ENCODE measurements at regions of chr7 and their contacts with region 1.

Region 1: GRCh38 chr7:19026888-19027287 is 90.5 kb downstream of the TWIST1 start:
- DNase-seq: no peak
- H3K4me3 ChIP-seq: no peak overlapping the region
- H3K27ac ChIP-seq: no peak overlapping the region
- H3K4me1 ChIP-seq: no peaks in the 10 kb centered on the region
- H3K27me3 ChIP-seq: no peaks in the 10 kb centered on the region
- CTCF ChIP-seq: no peak
- POLR2A ChIP-seq: no peak

Region 2: GRCh38 chr7:17802056-17802455 is 1224.8 kb before region 1 on chr7:
- intact Hi-C with region 1: no loop called
- DNase-seq: no peak
- H3K4me3 ChIP-seq: no peak overlapping the region
- H3K27ac ChIP-seq: no peak overlapping the region
- H3K4me1 ChIP-seq: no peaks in the 10 kb centered on the region
- H3K27me3 ChIP-seq: no peaks in the 10 kb centered on the region
- CTCF ChIP-seq: no peak
- POLR2A ChIP-seq: no peak

Region 3: DNA sequence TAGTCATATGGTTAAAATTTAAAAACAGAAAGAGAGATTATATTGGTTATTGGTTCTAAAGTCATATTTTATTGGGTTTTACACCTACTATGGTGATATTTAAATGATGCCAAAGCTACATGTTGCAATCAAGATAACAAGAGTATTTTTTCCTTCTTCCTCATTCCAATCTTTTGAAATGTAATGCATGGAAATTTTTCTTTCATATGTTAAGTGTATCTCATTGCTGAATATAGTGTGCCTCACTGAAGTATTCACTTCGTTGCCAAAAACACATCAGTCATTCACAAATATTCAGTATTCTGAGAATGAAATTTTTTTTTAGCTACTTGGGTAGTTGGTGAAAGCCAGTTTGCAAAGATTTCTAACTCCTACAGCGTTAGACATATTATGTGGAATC is 511.8 kb before region 1 on chr7:
- intact Hi-C with region 1: no loop called
- DNase-seq: no peak
- H3K4me3 ChIP-seq: no peak overlapping the region
- H3K27ac ChIP-seq: no peak overlapping the region
- H3K4me1 ChIP-seq: no peaks in the 10 kb centered on the region
- H3K27me3 ChIP-seq: no peaks in the 10 kb centered on the region
- CTCF ChIP-seq: no peak
- POLR2A ChIP-seq: no peak

Region 4: DNA sequence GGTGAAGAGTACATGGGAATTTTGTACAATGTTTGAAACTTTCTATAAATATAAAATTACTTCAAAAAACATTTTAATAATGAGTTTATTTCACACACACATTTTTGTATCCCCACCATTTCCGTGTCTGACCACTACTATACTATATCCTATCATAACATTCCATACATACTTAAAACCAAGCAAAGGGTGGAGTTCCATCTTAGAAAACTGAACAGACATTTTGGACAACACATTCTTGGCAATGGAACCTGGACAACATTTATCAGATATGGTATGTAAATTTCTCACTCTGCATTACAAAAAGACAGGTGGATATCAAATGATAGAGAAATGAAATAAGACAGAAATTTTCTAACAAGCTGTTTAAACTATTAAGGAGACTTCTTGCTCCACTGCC is 78.4 kb before region 1 on chr7:
- intact Hi-C with region 1: no loop called
- DNase-seq: no peak
- H3K4me3 ChIP-seq: no peak overlapping the region
- H3K27ac ChIP-seq: no peak overlapping the region
- H3K4me1 ChIP-seq: no peaks in the 10 kb centered on the region
- H3K27me3 ChIP-seq: no peaks in the 10 kb centered on the region
- CTCF ChIP-seq: no peak
- POLR2A ChIP-seq: no peak

Region 5: DNA sequence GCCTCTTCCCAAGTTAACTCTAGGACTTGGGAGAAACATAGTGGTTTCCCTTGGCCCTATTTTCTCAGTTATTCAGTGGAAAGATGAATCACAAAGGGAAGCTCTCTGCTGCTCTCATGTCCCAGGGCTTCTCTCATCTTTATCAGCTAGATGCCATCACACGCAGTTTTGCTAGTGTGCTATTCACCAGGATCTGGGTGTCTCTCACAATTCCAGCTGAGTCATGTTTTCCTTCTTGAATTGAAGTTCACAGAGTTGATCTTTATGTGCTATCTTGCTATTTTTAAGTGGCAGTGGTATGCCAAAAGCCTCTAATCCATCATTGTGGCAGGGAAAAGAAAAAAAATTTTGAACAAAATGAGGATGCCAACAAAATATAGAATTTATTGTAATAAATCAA is 10.7 kb before region 1 on chr7:
- intact Hi-C with region 1: loop called (anchors 2 kb)
- DNase-seq: no peak
- H3K4me3 ChIP-seq: no peak overlapping the region
- H3K27ac ChIP-seq: no peak overlapping the region
- H3K4me1 ChIP-seq: no peaks in the 10 kb centered on the region
- H3K27me3 ChIP-seq: no peaks in the 10 kb centered on the region
- CTCF ChIP-seq: no peak
- POLR2A ChIP-seq: no peak

Measured in breast epithelium (tissue), 4 donors.